Colonic mucosa (tissue), 4 donors: ENCODE measurements at regions of chr1 and their contacts with region 1.

Region 1: DNA sequence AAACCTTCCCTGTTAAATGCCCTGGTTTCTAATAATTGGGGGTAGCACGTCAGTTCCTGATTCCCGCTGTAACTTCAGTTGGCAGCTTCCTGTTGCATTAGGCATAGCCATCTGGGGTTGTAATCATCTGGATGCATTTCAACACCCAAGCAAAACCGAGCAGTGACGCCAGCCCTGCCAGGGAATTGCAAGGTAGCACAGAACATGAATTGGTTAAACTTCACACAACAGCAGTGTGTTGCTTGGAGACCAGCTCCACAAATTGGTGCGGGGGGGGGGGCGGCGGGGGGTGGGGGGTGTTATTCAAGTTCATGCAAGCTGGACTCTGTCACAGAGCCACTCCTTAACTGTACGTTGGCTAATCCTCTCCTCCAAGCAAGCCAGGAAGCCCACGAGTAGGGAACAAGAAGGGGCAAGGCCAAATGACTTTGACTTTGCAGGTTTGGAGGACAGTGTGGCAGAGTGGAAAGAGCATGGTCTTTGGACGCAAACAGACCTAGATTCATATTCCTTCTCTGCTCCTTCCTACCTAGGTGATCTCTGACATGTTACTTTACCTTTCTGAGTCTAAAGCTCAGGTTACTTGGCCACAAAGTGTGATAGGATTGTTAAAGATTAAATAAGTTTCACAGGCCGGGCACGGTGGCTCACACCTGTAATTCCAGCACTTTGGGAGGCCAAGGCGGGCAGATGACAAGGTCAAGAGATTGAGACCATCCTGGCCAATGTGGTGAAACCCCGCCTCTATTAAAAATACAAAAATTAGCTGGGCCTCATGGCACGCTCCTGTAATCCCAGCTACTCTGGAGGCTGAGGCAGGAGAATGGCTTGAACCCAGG is 4.7 kb downstream of the LAX1 start:
- DNase-seq: peak; percentile 86
- H3K4me3 ChIP-seq: no peak overlapping the region
- H3K27ac ChIP-seq: peak overlapping the region; percentile 68
- H3K4me1 ChIP-seq: no peaks in the 10 kb centered on the region
- H3K27me3 ChIP-seq: no peaks in the 10 kb centered on the region
- CTCF ChIP-seq: no peak

Region 2: DNA sequence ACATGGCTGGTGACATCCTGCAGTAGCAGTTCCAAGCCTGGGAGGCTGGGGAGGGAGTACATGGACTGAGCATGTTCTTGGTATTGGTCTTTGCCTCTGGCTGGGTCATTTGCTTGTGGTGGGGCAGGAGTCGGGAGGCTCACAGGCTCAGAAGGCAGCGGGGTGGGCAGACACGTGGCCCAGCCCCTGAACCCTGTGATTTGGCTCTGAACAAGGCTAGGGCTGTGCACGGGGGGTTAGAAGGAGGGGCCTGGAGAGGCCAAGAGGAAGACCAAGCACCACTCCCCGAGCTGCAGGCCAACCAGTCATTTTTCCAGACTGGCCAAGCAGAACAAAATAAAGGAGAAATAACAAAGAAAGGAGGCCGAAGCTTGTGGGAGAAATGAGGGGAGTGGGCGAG is 303.8 kb before region 1 on chr1:
- intact Hi-C with region 1: no loop called
- DNase-seq: no peak
- H3K4me3 ChIP-seq: no peak overlapping the region
- H3K27ac ChIP-seq: peak overlapping the region; percentile 32
- H3K4me1 ChIP-seq: no peaks in the 10 kb centered on the region
- H3K27me3 ChIP-seq: no peaks in the 10 kb centered on the region
- CTCF ChIP-seq: no peak

Region 3: GRCh38 chr1:203504397-203505250 is 265.1 kb before region 1 on chr1:
- intact Hi-C with region 1: loop called (anchors 10 kb)
- DNase-seq: peak; percentile 85
- H3K4me3 ChIP-seq: no peak overlapping the region
- H3K27ac ChIP-seq: no peak overlapping the region
- H3K4me1 ChIP-seq: no peaks in the 10 kb centered on the region
- H3K27me3 ChIP-seq: no peaks in the 10 kb centered on the region
- CTCF ChIP-seq: peak; percentile 80